ENCODE measurements at regions of chr4 and their contacts with region 1.

Region 1: GRCh38 chr4:78775303-78776030 is 683 bp upstream of the BMP2K start:
- DNase-seq: peak; percentile 88 to 90
- H3K4me3 ChIP-seq: peak overlapping the region; percentile 16 to 99 (median 79)
- H3K27ac ChIP-seq: peak overlapping the region; percentile 98 to 99 (median 98)
- H3K4me1 ChIP-seq: peaks cover 19 to 20% of the 10 kb centered on the region in 2 donors
- H3K27me3 ChIP-seq: no peaks in the 10 kb centered on the region
- CTCF ChIP-seq: no peak
- POLR2A ChIP-seq: peak in 1 of 2 donors; percentile 53

Region 2: DNA sequence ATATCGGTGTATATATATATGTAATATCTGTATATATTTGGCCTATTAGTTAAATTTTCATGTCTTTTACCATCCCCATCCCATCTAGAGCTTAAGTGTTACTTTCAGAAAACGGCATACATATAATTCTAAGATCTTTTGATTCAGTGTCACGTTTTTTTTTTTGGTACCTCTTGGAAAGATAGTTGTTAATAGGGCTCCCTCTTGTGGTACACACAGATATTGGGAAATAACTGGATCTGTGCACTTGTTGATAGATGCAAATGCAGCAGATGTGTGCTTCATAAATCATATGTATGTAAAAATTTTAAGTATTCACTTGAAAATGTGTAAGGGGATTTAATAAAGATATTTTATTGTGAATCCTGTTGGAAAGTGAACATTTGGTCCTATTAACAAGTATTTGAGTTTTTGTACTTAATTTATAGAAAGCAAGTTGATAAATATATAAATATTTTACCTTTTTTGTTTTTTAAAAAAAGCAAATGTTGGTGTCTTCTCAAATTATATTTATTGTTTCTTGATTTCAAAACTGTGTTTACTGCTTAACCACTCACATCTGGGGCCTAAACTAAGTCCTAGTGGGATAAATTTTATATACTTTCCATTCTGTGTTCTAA is 89.0 kb after region 1 on chr4:
- intact Hi-C with region 1: loop called (anchors 2 kb)
- DNase-seq: no peak
- H3K4me3 ChIP-seq: no peak overlapping the region
- H3K27ac ChIP-seq: no peak overlapping the region
- H3K4me1 ChIP-seq: no peaks in the 10 kb centered on the region
- H3K27me3 ChIP-seq: no peaks in the 10 kb centered on the region
- CTCF ChIP-seq: peak; percentile 42 to 89 (median 66)
- POLR2A ChIP-seq: no peak

Measured in thyroid gland (tissue), 4 donors.